Activated B cell treated with CpG ODN at 0.5 μM for 24 hours (primary cell): ENCODE measurements at regions of chrX and their contacts with region 1.

Region 1: GRCh38 chrX:120726294-120726693 is 96.4 kb upstream of the C1GALT1C1 start:
- DNase-seq: no peak
- ATAC-seq: peak; percentile 95
- H3K4me3 Mint-ChIP-seq: peak overlapping the region; percentile 39
- H3K27ac Mint-ChIP-seq: peak overlapping the region; percentile 81
- H3K4me1 Mint-ChIP-seq: peaks cover 26% of the 10 kb centered on the region
- H3K27me3 Mint-ChIP-seq: no peaks in the 10 kb centered on the region
- CTCF ChIP-seq: no peak

Region 2: DNA sequence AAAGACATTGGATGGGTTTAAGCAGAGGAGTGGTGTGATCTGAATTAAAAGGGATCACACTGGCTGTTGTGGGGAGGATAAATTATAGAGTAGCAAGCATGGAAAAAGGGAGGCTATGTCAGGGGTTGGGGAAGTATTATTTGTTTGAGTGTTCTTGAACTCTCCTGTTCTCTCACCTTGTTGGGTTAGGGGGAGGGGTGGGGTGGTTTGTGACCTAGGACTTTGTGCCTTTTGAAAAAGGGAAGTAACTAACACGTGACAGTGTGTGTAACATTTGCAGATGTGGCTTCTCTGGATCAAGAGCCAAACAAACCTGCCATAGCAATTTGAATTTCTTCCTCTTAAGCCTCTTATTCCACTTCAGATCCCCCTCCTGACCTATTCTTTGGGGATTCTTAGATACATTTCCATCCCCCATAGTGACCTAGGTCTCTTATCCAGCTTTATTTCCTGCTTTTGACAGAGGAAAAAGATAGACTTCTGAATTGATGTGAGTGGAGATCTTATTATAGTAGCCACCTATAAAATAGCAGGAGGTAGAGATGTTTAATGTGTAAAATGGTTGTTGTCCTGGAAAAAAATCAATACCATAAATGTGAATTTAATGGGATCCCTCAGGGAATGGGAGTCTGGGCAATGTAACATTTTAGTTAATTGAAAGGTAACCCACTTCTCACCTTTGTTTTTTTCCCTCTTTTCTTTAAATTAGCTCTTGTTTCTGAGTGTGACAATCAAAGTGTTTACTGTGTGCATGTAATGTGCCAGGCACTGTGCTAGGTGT is 29.0 kb after region 1 on chrX:
- CTCF ChIA-PET with region 1: interaction called, 5 read pairs
- POLR2A ChIA-PET with region 1: interaction called, 7 read pairs
- intact Hi-C with region 1: loop called (anchors 2 kb)
- DNase-seq: peak; percentile 23
- ATAC-seq: peak; percentile 79
- H3K4me3 Mint-ChIP-seq: peak overlapping the region; percentile 3
- H3K27ac Mint-ChIP-seq: peak overlapping the region; percentile 90
- H3K4me1 Mint-ChIP-seq: peaks cover 88% of the 10 kb centered on the region
- H3K27me3 Mint-ChIP-seq: no peaks in the 10 kb centered on the region
- CTCF ChIP-seq: no peak